A673 (cell line): ENCODE measurements at regions of chr1 and their contacts with region 1.

Region 1: GRCh38 chr1:97920832-97921571 is at the start of gene DPYD:
- DNase-seq: peak; percentile 96
- H3K4me3 ChIP-seq: peak within 1 kb of the TSS; percentile 84
- H3K27ac ChIP-seq: peak within 1 kb of the TSS; percentile 67
- H3K4me1 ChIP-seq: peaks cover 20% of the 10 kb centered on the region
- H3K27me3 ChIP-seq: no peaks in the 10 kb centered on the region
- CTCF ChIP-seq: no peak
- total RNA-seq, gene DPYD: 10.8 and 13.4 TPM in 2 replicates

Region 2: DNA sequence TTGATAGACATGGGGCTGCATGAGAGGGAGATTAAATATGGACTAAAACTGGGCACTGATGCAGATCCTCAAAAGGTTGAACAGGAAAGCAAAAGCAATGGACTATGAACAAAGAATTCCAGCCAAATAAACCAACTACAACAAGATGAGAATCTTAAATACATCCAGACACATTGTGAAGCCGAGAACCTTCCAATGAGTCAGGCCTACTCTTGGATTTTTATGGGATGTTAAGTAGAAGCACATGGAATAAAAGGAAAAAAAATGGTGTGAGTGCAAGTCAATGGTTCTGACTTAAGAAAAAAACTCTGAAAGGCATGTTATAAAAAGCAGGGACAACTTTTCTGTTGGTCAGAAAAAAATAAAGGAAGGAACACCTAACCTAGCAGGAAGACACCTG is 227.4 kb before region 1 on chr1:
- CTCF ChIA-PET with region 1: no interaction called
- POLR2A ChIA-PET with region 1: interaction called, 16 read pairs
- intact Hi-C with region 1: no loop called
- DNase-seq: no peak
- H3K4me3 ChIP-seq: no peak overlapping the region
- H3K27ac ChIP-seq: no peak overlapping the region
- H3K4me1 ChIP-seq: no peaks in the 10 kb centered on the region
- H3K27me3 ChIP-seq: no peaks in the 10 kb centered on the region
- CTCF ChIP-seq: no peak

Region 3: DNA sequence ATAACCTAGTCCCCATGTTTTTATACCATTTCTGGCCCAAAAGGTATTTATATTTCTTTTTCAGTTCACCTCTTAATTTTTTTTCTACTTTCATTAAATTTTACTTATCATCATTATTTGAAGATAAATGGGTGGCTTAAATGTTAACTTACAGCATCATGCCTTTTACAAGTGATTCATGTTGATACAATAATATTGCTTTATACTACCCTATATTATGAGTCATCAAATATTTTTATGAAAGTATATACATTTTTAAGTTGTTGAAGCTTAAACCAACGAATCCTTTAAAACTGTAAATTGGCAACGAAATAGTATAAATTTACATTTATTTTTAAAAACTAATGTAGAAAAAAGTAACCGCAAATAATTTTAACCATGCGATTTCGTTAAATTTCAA is 208.0 kb before region 1 on chr1:
- CTCF ChIA-PET with region 1: no interaction called
- POLR2A ChIA-PET with region 1: no interaction called
- intact Hi-C with region 1: no loop called
- DNase-seq: no peak
- H3K4me3 ChIP-seq: no peak overlapping the region
- H3K27ac ChIP-seq: no peak overlapping the region
- H3K4me1 ChIP-seq: no peaks in the 10 kb centered on the region
- H3K27me3 ChIP-seq: no peaks in the 10 kb centered on the region
- CTCF ChIP-seq: no peak